Naive thymus-derived CD8-positive, alpha-beta T cell (primary cell): ENCODE measurements at regions of chr19 and their contacts with region 1.

Region 1: GRCh38 chr19:16584248-16585141 is 12.3 kb upstream of the SLC35E1 start:
- DNase-seq: peak; percentile 72 to 91 (median 86)
- ATAC-seq: peak; percentile 79 to 84
- H3K4me3 Mint-ChIP-seq: peak overlapping the region; percentile 64 to 87 (median 78)
- H3K27ac Mint-ChIP-seq: peak overlapping the region; percentile 51 to 97 (median 92)
- H3K4me1 Mint-ChIP-seq: peaks cover 23 to 94% (median 89%) of the 10 kb centered on the region in 4 donors
- H3K27me3 Mint-ChIP-seq: no peaks in the 10 kb centered on the region

Region 2: DNA sequence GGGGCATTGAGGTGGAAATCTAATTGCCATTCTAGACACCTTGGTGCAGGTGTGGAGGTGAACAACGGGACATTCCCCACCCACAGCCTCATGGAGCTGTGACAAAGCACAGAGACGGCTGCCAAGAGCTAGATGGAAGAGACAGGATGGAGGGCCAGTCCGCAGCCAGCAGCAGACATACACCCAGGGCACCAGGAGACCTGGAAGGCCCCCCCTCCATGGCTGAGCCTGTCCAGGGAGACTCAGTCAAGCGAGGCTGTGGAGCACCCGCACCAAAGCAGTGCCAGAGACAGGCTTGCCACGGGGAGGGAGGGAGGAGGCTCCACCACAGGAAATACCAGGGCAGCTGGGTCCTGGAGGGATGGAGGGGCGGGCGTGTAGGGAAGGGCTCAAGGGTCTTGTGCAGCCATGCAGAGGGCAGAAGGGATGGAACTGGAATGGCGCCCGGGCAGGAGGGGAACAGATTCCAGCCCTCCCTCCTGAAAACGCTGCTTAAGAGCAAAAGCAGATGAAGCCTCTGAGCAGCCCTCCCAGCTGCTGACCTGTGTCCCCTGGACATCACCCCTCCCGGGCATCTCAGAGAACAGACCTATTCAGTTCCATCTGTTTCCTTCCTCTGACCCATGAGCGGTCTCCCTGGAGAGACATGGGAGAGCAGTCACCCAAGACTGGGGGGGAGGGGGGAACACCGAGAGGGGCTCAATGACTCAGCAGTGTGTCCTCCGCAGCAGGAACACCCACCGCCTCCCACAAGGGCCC is 127.1 kb before region 1 on chr19:
- POLR2A ChIA-PET with region 1: no interaction called
- DNase-seq: no peak
- ATAC-seq: peak; percentile 44 to 57
- H3K4me3 Mint-ChIP-seq: peak overlapping the region; percentile 4 to 80 (median 55)
- H3K27ac Mint-ChIP-seq: peak overlapping the region in 8 of 10 donors; percentile 6 to 83 (median 58)
- H3K4me1 Mint-ChIP-seq: peaks cover 40 to 70% (median 64%) of the 10 kb centered on the region in 4 donors
- H3K27me3 Mint-ChIP-seq: no peaks in the 10 kb centered on the region

Region 3: GRCh38 chr19:16566161-16566560 is 18.3 kb before region 1 on chr19:
- POLR2A ChIA-PET with region 1: interaction called, 39 read pairs
- DNase-seq: peak; percentile 58 to 94 (median 86)
- ATAC-seq: peak; percentile 99
- H3K4me3 Mint-ChIP-seq: peak overlapping the region; percentile 59 to 93 (median 86)
- H3K27ac Mint-ChIP-seq: peak overlapping the region; percentile 95 to 100 (median 99)
- H3K4me1 Mint-ChIP-seq: peaks cover 6 to 49% (median 27%) of the 10 kb centered on the region in 4 donors
- H3K27me3 Mint-ChIP-seq: no peaks in the 10 kb centered on the region

Region 4: DNA sequence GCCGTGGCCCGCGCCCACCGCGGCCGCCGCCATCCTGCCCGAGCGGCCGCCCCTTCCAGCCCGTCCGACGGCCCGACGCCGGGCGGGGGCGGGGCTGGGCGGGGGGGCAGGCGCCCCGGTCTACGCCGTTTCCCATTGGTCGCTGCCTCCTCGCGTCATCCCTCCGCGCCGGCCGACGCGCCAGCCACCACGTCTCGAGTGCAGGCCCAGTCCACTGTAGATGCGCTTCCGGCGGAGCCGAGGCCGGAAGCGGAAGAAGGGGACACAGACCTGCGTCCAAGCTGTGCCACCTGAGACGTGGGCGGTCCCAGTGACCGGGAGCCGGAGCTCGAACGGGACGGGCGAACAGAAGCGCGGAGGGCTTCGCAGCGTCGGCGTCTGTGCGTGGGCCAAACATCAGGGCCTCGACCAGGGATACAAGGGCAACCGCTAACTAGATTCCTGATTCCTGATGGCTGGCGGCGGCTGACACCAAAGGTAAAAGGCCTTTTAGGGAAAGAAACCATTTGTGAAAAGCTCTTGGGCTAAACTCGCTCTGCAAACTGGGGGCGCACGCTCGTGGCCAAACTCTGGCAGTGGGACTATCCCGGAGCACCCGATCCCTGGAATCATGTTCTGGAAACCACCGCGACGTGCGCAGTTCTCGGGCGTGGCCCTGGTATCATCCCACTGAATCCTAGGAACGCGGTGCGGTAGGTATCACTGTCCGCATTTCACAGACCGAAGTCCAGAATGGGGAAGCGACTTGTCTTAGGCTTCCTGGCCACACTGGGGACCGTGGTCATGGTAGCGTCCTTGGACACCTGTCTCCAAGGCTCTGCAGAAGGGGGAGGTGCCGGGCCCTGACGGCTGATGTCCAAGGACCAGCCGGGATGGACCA is 11.9 kb before region 1 on chr19 and contains the start of gene SLC35E1:
- POLR2A ChIA-PET with region 1: interaction called, 39 read pairs
- DNase-seq: peak; percentile 83 to 95 (median 88)
- ATAC-seq: peak; percentile 89 to 92
- H3K4me3 Mint-ChIP-seq: peak within 1 kb of the TSS; percentile 93 to 99 (median 98)
- H3K27ac Mint-ChIP-seq: peak within 1 kb of the TSS; percentile 97 to 99 (median 99)
- H3K4me1 Mint-ChIP-seq: peaks cover 12 to 69% (median 52%) of the 10 kb centered on the region in 4 donors
- H3K27me3 Mint-ChIP-seq: no peaks in the 10 kb centered on the region
- polyA plus RNA-seq, gene SLC35E1: 13.6 to 22.3 (median 16.1) TPM

Region 5: GRCh38 chr19:16628183-16628983 is 43.9 kb after region 1 on chr19 and contains the start of gene MED26:
- POLR2A ChIA-PET with region 1: interaction called, 40 read pairs
- DNase-seq: peak; percentile 89 to 97 (median 94)
- ATAC-seq: peak; percentile 91 to 93
- H3K4me3 Mint-ChIP-seq: peak within 1 kb of the TSS; percentile 95 to 99 (median 96)
- H3K27ac Mint-ChIP-seq: peak within 1 kb of the TSS; percentile 92 to 99 (median 98)
- H3K4me1 Mint-ChIP-seq: peaks cover 22 to 52% (median 47%) of the 10 kb centered on the region in 4 donors
- H3K27me3 Mint-ChIP-seq: no peaks in the 10 kb centered on the region
- polyA plus RNA-seq, gene MED26: 2.7 to 3.9 (median 3.1) TPM